GM23248 (cell line): ENCODE measurements at regions of chr1 and their contacts with region 1.

Region 1: GRCh38 chr1:162056043-162056442 is 13.4 kb upstream of the NOS1AP start:
- DNase-seq: peak; percentile 82
- H3K4me3 ChIP-seq: no peak overlapping the region
- H3K27ac ChIP-seq: no peak overlapping the region
- H3K4me1 ChIP-seq: peaks cover 9% of the 10 kb centered on the region; the same call in 1 of the 2 replicates
- H3K27me3 ChIP-seq: no peaks in the 10 kb centered on the region

Region 2: DNA sequence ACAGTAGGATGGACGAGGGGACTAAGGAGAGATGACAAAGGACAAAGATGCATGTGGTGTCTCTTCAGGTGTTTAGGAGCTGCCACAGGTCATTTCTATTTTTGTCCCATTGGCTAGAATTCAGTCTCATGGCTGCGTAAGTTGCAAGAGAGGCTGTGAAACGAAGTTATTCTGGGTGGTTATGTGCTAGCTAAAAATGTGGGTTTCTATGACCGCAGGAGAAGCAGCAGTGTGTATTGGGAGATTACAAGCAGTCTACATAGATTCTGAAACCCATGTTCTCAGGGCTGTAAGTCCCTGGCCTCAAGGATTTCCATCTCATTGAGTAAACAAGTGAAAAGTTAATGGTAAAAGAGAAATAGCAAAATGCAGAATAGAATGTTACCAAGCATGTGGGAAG is 209.9 kb after region 1 on chr1:
- in situ Hi-C with region 1: loop called (anchors 10 kb)
- DNase-seq: no peak
- H3K4me3 ChIP-seq: no peak overlapping the region
- H3K27ac ChIP-seq: no peak overlapping the region
- H3K4me1 ChIP-seq: no peaks in the 10 kb centered on the region
- H3K27me3 ChIP-seq: no peaks in the 10 kb centered on the region; the same call in 1 of the 2 replicates

Region 3: DNA sequence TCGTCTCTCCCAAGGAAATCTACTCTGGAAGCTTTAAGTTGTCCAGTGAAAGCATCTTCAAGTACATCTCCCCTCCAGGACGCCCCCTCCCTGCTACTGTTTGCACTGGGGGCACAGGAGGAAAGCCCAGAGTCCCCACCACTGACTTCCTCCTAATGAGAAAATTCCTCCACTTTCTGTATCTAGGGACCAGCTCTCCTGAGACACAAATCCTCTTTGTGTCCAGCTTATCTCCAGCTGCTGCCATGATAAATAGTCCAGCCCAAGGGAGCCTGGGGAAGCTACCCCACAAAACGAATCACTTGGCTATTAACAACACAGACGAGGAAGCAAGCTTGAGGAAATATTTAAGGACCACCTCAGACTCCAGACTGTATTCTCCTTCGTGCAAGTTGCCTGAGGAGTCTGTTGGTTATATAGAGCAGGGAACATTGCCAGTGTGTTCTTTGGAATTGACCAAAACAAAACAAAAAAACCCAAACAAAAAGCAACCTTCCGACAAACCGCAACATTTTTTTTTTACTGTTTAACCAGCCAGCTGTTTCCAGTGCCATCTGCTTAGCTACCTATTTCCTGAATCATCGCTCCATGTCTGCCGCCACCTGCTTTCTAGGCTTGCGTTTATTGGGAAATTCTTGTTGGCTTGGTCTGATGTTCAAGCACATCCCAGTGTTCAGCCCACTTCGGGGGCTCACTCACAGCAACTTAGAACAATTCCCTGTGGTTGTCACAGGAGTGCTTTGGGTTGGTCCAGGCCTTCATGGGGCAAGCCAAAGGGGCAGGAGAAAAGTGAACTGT is 333.2 kb after region 1 on chr1:
- in situ Hi-C with region 1: loop called (anchors 10 kb)
- DNase-seq: peak; percentile 48
- H3K4me3 ChIP-seq: no peak overlapping the region
- H3K27ac ChIP-seq: no peak overlapping the region
- H3K4me1 ChIP-seq: 0 out of 2 replicates have a peak, but pooled peaks cover 3% of the 10 kb centered on the region
- H3K27me3 ChIP-seq: peaks cover 6% of the 10 kb centered on the region; the same call in 1 of the 2 replicates